ENCODE measurements at regions of chr4 and their contacts with region 1.

Region 1: GRCh38 chr4:99665983-99666382 is 8.4 kb upstream of the C4orf54 start:
- DNase-seq: no peak
- H3K4me3 ChIP-seq: no peak overlapping the region
- H3K27ac ChIP-seq: no peak overlapping the region
- H3K4me1 ChIP-seq: no peaks in the 10 kb centered on the region
- H3K27me3 ChIP-seq: no peaks in the 10 kb centered on the region
- CTCF ChIP-seq: no peak
- POLR2A ChIP-seq: no peak

Region 2: GRCh38 chr4:99248714-99249113 is 417.3 kb before region 1 on chr4:
- intact Hi-C with region 1: no loop called
- DNase-seq: no peak
- H3K4me3 ChIP-seq: no peak overlapping the region
- H3K27ac ChIP-seq: no peak overlapping the region
- H3K4me1 ChIP-seq: no peaks in the 10 kb centered on the region
- H3K27me3 ChIP-seq: no peaks in the 10 kb centered on the region
- CTCF ChIP-seq: no peak
- POLR2A ChIP-seq: no peak

Region 3: GRCh38 chr4:99276417-99276816 is 389.6 kb before region 1 on chr4:
- intact Hi-C with region 1: no loop called
- DNase-seq: no peak
- H3K4me3 ChIP-seq: no peak overlapping the region
- H3K27ac ChIP-seq: no peak overlapping the region
- H3K4me1 ChIP-seq: no peaks in the 10 kb centered on the region
- H3K27me3 ChIP-seq: no peaks in the 10 kb centered on the region
- CTCF ChIP-seq: no peak
- POLR2A ChIP-seq: no peak

Region 4: GRCh38 chr4:99430111-99430510 is 235.9 kb before region 1 on chr4:
- intact Hi-C with region 1: no loop called
- DNase-seq: no peak
- H3K4me3 ChIP-seq: no peak overlapping the region
- H3K27ac ChIP-seq: no peak overlapping the region
- H3K4me1 ChIP-seq: no peaks in the 10 kb centered on the region
- H3K27me3 ChIP-seq: no peaks in the 10 kb centered on the region
- CTCF ChIP-seq: no peak
- POLR2A ChIP-seq: no peak

Region 5: GRCh38 chr4:99710681-99711345 is 44.8 kb after region 1 on chr4:
- intact Hi-C with region 1: loop called (anchors 10 kb)
- DNase-seq: no peak
- H3K4me3 ChIP-seq: no peak overlapping the region
- H3K27ac ChIP-seq: no peak overlapping the region
- H3K4me1 ChIP-seq: no peaks in the 10 kb centered on the region
- H3K27me3 ChIP-seq: no peaks in the 10 kb centered on the region
- CTCF ChIP-seq: no peak
- POLR2A ChIP-seq: no peak

Region 6: GRCh38 chr4:99855678-99856077 is 189.7 kb after region 1 on chr4:
- intact Hi-C with region 1: no loop called
- DNase-seq: no peak
- H3K4me3 ChIP-seq: no peak overlapping the region
- H3K27ac ChIP-seq: peak overlapping the region in 1 of 2 donors; percentile 62
- H3K4me1 ChIP-seq: no peaks in the 10 kb centered on the region
- H3K27me3 ChIP-seq: no peaks in the 10 kb centered on the region
- CTCF ChIP-seq: no peak
- POLR2A ChIP-seq: no peak